HepG2 (cell line): ENCODE measurements at regions of chr19 and their contacts with region 1.

Region 1: DNA sequence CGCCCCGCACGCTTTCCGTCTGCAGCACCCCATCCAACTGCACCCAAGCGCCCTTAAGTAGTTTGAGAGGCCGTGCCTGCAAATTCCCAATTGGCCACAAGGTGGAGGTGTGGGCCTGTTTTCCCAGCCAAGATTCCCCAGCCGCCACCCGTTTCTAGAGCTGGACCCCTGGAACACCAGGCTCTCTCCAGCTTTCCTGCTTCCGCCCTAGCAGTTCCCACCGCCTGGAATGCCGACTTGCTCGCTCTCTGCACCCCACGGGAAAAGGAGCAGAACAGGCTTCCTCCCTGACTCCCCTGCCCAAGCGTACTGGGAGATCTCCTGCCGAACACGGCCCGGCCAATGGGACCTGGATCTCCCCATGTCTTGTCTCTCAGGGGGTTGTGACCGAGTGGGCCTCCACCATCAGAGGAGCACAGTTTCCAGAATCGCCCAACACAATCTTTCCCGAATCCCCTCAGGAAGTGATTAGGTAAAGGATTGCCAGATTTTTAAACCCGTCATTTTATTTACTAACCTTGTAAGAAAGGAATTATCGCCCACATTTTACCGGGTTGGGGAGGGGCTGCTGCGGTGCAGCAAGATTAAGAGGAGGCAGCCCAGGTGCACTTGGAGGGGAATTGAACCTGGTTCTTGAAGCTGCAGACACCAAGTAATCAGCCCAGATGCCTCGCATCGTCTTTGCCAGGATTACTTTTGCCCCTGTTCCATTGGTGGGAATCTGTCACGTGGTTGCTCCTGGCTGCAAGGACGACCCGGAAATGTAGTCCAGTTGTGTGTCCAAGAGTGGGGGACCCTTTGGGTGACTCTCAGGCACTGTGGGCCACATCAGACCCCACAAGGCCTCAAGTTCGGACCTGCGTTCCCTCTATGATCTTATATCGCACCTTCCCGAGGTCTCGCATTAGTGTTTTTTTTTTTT is 3.5 kb upstream of the NAPSA start:
- DNase-seq: peak; percentile 62
- ATAC-seq: peak; percentile 87
- H3K4me3 ChIP-seq: peak overlapping the region in 2 of 3 experiments; percentile 38 to 53; a peak in 5 of 6 replicates
- H3K27ac ChIP-seq: no peak overlapping the region
- H3K4me1 ChIP-seq: peaks cover 13% of the 10 kb centered on the region
- H3K27me3 ChIP-seq: no peaks in the 10 kb centered on the region
- CTCF ChIP-seq: peak; percentile 92
- EP300 ChIP-seq: no peak
- POLR2A ChIP-seq: no peak
- RAD21 ChIP-seq: peak; percentile 85

Region 2: GRCh38 chr19:50414864-50415660 is 46.2 kb after region 1 on chr19:
- CTCF ChIA-PET with region 1: interaction called, 12 read pairs
- POLR2A ChIA-PET with region 1: no interaction called
- in situ Hi-C with region 1: no loop called
- intact Hi-C with region 1: loop called (anchors 1 kb)
- DNase-seq: peak; percentile 33
- ATAC-seq: peak; percentile 81
- H3K4me3 ChIP-seq: no peak overlapping the region
- H3K27ac ChIP-seq: no peak overlapping the region
- H3K4me1 ChIP-seq: peaks cover 13% of the 10 kb centered on the region
- H3K27me3 ChIP-seq: no peaks in the 10 kb centered on the region
- CTCF ChIP-seq: peak; percentile 89
- EP300 ChIP-seq: no peak
- POLR2A ChIP-seq: no peak
- RAD21 ChIP-seq: peak; percentile 73; the same call in 1 of the 2 replicates

Region 3: DNA sequence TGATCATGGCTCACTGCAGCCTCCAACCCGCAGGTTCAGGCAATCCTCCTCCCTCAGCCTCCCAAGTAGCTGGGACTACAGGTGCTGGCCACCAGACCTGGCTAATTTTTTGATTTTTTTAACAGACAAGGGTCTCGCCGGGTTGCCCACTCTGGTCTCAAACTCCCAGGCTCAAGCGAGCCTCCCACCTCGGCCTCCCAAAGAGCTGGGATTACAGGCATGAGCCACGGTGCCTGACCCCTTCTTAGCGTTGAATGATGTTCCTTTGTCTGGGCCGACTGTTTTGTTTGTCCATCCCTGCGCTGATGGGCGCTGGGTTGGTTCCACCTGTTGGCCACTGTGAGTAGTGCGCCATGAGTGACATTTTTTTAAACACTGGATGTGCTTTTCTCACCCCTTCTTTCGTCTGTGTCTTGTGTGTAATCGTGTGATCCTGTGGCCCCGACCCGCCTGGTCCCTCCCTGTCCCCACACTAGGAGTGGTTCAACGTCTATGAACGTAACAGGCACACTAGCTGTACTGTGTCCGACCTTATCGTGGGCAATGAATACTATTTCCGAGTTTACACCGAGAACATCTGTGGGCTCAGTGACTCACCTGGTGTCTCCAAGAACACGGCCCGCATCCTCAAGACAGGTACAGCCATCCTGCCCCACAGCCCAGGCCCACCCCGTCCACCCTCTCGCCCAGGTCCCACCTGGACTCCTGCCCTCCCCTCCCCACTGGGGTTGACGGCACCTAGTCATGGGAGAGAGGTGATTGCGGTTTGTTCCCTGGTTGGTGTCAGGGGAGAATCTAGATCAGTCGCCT is 92.4 kb after region 1 on chr19:
- CTCF ChIA-PET with region 1: interaction called, 16 read pairs
- POLR2A ChIA-PET with region 1: interaction called, 5 read pairs
- in situ Hi-C with region 1: loop called (anchors 10 kb)
- intact Hi-C with region 1: loop called (anchors 1 kb)
- DNase-seq: peak; percentile 71
- ATAC-seq: peak; percentile 63
- H3K4me3 ChIP-seq: peak overlapping the region in 1 of 3 experiments; percentile 43; a peak in 1 of 6 replicates
- H3K27ac ChIP-seq: no peak overlapping the region
- H3K4me1 ChIP-seq: peaks cover 46% of the 10 kb centered on the region
- H3K27me3 ChIP-seq: peaks cover 0 to 7% of the 10 kb centered on the region in 2 experiments; a peak in 2 of 5 replicates
- CTCF ChIP-seq: peak; percentile 89
- EP300 ChIP-seq: no peak
- POLR2A ChIP-seq: no peak
- RAD21 ChIP-seq: peak; percentile 72

Region 4: DNA sequence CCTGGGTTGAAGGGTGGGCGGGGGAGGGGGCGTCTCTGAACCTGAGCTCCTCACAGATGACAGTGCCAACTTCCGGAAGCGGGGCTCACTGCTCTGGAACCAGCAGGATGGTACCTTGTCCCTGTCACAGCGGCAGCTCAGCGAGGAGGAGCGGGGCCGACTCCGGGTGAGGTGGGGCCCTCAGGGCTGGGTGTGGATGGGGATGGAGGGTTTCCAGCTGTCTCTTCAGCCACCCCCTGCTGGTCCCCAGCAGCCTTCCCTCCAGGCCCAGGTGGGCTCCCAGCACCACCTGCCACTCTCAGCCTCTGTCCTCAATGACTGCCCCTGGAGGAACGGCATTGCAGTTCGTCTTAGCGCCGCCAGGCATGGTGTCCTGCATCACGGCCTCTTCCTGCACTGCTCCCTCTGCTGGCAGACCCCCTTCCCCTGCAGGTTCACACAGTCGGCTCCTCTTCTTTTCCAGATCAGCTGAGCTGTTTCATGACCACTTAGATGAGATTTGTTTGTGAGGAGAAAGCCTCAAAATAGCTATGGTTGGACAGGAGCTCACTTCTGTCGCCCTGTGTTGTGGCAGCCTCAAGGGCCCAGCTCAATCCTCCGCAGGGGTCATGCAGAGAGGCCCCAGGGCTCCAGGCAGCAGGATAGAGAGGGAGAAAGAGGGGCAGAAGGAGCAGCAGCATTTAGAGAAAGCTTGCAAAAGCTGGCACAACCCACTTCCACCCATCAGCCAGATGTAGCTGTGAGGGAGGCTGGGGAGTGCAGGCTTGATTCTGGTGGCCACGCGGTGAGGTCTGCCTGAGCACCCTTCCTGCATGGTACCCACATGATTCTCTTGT is 110.2 kb after region 1 on chr19:
- CTCF ChIA-PET with region 1: interaction called, 71 read pairs
- POLR2A ChIA-PET with region 1: interaction called, 3 read pairs
- in situ Hi-C with region 1: no loop called
- intact Hi-C with region 1: loop called (anchors 1 kb)
- DNase-seq: peak; percentile 81
- ATAC-seq: peak; percentile 93
- H3K4me3 ChIP-seq: no peak overlapping the region
- H3K27ac ChIP-seq: no peak overlapping the region
- H3K4me1 ChIP-seq: no peaks in the 10 kb centered on the region
- H3K27me3 ChIP-seq: peaks cover 4 to 8% of the 10 kb centered on the region in 2 experiments; a peak in 3 of 5 replicates
- CTCF ChIP-seq: peak; percentile 92
- EP300 ChIP-seq: no peak
- POLR2A ChIP-seq: no peak
- RAD21 ChIP-seq: peak; percentile 88